HepG2 (cell line): ENCODE measurements at regions of chr6 and their contacts with region 1.

Region 1: DNA sequence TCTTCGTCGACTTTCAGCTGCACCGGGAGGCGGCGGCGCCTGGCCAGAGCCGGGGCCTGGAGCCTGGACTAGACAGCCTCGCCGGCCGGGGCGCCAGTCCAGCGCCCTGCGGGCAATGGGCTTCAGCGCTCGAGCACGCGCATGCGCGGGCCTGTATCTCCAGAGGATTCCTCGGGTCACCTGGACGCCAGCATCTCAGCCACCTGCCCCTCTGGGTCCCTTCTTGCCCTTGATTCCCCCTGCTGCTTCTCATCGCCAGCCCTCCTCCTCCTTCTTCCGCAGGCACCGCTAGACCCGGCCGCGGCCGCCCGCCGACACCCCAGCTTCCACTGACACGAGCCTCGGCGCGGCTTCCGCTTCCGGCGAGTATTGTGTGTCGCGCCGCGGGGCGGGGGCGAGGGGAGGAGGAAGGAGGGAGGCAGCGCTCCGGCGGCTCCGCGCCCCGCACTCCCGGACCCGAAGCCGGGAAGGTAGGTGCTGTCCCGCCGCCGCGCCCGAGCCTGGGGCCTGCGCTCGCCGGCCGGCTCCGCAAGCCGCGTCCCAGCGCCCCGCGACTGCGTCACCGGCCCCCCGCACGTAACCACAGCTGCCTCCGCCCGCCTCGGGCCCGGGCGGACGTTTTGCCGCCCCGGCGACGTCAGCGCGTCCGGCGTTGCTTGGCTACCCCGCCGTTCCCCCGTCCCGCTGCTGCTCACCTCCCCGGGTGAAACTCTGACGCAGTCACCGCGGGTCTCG is at the start of gene TRIM39:
- DNase-seq: peak; percentile 75
- ATAC-seq: peak; percentile 86
- H3K4me3 ChIP-seq: peak within 1 kb of the TSS; percentile 74 to 93 (median 78)
- H3K27ac ChIP-seq: peak within 1 kb of the TSS; percentile 92
- H3K4me1 ChIP-seq: peaks cover 47% of the 10 kb centered on the region
- H3K27me3 ChIP-seq: no peaks in the 10 kb centered on the region; a peak in 1 of 5 replicates
- CTCF ChIP-seq: peak; percentile 18; the same call in 1 of the 2 replicates
- EP300 ChIP-seq: no peak; a peak in 1 of 4 replicates
- POLR2A ChIP-seq: peak; percentile 56 to 61
- RAD21 ChIP-seq: peak; percentile 45; the same call in 1 of the 2 replicates
- total RNA-seq, gene TRIM39: 13.8 and 14.6 TPM in 2 replicates

Region 2: DNA sequence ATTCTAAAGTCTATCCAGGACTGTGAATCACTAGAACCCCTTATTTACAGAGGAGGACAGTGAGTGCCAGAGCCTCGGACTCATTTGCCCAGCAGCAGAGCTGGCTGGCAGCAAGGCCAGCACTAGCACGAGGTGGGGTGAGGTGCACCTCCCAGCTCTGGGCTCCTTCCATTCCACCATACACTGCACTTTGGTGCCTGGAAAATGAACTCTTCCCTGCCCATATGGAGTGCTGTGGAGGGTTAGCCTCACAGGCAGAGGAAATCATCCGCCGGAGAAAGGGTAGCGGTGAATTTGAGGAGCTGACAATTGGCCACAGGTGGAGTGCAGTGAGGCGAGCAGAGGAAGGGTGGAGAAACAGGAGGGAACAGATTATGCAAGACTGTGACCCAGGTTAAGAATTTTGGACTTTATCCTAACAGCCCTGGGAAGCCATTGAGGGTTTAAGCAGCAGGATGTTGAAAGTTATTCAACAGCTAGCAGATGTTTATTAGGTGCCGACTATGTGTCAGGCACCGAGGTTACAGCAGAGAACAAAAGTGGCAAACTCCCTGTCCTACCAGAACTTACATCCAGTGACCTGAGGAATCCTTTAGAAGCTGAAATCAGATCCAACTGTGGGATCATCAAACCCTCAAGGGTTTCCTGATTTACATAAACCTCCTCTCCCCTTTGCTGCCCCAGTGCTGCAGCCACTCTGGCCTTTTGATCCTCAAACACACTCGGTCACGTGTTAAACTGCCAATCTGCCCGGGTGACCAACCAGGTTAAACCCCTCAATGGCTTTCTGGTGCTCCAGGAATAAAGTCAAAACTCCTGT is 119.7 kb before region 1 on chr6:
- CTCF ChIA-PET with region 1: no interaction called
- POLR2A ChIA-PET with region 1: interaction called, 13 read pairs
- in situ Hi-C with region 1: no loop called
- intact Hi-C with region 1: no loop called
- DNase-seq: peak; percentile 95
- ATAC-seq: peak; percentile 82
- H3K4me3 ChIP-seq: peak overlapping the region; percentile 27 to 66 (median 46)
- H3K27ac ChIP-seq: peak overlapping the region; percentile 93
- H3K4me1 ChIP-seq: peaks cover 86% of the 10 kb centered on the region
- H3K27me3 ChIP-seq: no peaks in the 10 kb centered on the region
- CTCF ChIP-seq: no peak
- EP300 ChIP-seq: peak in 1 of 2 experiments; percentile 81; a peak in 2 of 4 replicates
- POLR2A ChIP-seq: peak in 1 of 2 experiments; percentile 54; a peak in 3 of 4 replicates
- RAD21 ChIP-seq: 0 out of 2 replicates have a peak, but pooled peaks have one; percentile 9

Region 3: GRCh38 chr6:30212865-30213666 is 113.6 kb before region 1 on chr6 and contains the start of gene TRIM26:
- CTCF ChIA-PET with region 1: no interaction called
- POLR2A ChIA-PET with region 1: interaction called, 20 read pairs
- in situ Hi-C with region 1: no loop called
- intact Hi-C with region 1: no loop called
- DNase-seq: peak; percentile 97
- ATAC-seq: peak; percentile 94
- H3K4me3 ChIP-seq: peak within 1 kb of the TSS; percentile 92 to 99 (median 95)
- H3K27ac ChIP-seq: peak within 1 kb of the TSS; percentile 93
- H3K4me1 ChIP-seq: peaks cover 50% of the 10 kb centered on the region
- H3K27me3 ChIP-seq: peaks cover 0 to 2% of the 10 kb centered on the region in 2 experiments; a peak in 1 of 5 replicates
- CTCF ChIP-seq: no peak; the same call in 1 of the 2 replicates
- EP300 ChIP-seq: peak in 1 of 2 experiments; percentile 66; a peak in 2 of 4 replicates
- POLR2A ChIP-seq: peak; percentile 84 to 94
- RAD21 ChIP-seq: peak; percentile 43; the same call in 1 of the 2 replicates
- total RNA-seq, gene TRIM26: 38.7 and 46.2 TPM in 2 replicates

Region 4: GRCh38 chr6:30238174-30238795 is 88.4 kb before region 1 on chr6:
- CTCF ChIA-PET with region 1: no interaction called
- POLR2A ChIA-PET with region 1: no interaction called
- in situ Hi-C with region 1: no loop called
- intact Hi-C with region 1: loop called (anchors 10 kb)
- DNase-seq: peak; percentile 60
- ATAC-seq: peak; percentile 93
- H3K4me3 ChIP-seq: no peak overlapping the region
- H3K27ac ChIP-seq: no peak overlapping the region
- H3K4me1 ChIP-seq: no peaks in the 10 kb centered on the region
- H3K27me3 ChIP-seq: peaks cover 1 to 19% of the 10 kb centered on the region in 2 experiments
- CTCF ChIP-seq: peak; percentile 86
- EP300 ChIP-seq: no peak
- POLR2A ChIP-seq: no peak
- RAD21 ChIP-seq: peak; percentile 77

Region 5: DNA sequence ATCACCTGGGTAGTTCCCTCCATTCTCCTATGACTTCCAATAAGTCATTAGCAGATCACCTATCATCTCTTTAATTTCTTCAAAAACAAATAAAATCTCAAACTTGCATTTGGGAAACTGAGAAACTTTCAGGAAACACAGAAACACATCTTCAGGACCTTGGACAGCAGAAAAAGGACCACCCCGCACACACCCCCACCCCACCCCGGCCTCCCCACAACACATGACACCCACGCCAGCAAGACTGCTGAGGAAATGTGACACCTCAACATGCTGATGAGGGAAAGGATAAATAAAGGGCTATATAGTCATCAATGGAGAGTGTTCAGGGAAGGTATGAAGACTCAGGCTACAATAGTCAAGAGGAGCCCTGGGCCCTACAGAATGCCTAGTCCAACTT is 15.6 kb before region 1 on chr6:
- CTCF ChIA-PET with region 1: no interaction called
- POLR2A ChIA-PET with region 1: interaction called, 23 read pairs
- in situ Hi-C with region 1: no loop called
- intact Hi-C with region 1: no loop called
- DNase-seq: no peak
- ATAC-seq: peak; percentile 33; the same call in 2 of the 3 replicates
- H3K4me3 ChIP-seq: no peak overlapping the region
- H3K27ac ChIP-seq: peak overlapping the region; percentile 25
- H3K4me1 ChIP-seq: peaks cover 20% of the 10 kb centered on the region
- H3K27me3 ChIP-seq: no peaks in the 10 kb centered on the region
- CTCF ChIP-seq: no peak
- EP300 ChIP-seq: no peak
- POLR2A ChIP-seq: no peak
- RAD21 ChIP-seq: no peak